ENCODE measurements at regions of chr17 and their contacts with region 1.

Region 1: DNA sequence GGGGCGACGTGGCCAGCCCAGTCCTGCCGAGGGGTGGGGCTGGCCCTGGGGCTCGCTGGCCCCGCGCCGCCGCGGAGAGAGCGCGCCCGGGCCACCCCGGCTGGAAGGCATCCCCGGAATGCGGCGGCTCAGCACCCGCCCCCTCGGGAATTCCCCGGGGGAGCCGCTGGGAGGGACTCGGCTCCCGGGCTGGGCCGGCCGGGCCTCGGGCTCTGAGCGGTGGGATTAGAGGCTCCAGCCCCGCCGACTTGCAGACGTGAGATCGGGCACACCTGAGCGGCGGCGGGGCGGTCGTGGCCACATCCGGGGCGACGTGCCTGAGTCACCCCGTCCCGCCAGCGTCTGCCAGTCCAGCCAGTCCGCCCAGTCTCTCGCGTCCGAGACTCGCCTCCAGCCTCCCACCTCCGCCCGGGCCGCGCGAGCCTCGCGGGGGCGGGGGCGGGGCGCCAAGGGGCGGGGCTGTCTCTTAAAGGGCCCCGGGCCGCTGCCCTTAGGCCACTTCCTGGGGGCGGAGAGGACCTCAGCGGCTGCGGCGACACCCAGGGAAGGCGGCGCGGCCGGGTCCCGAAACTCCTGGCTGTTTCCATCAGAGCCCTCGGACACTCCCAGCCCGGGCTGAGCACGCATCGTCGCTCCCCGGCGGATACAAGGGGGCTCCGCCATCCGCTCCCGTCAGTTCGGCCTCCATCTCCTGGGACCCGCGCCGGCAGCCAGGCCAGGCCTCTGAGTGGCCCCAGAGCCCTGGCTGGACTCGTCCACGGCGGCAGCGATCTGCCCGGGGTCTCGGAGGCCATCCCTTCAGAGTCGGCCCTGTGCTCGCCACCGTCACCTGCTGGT is at the start of gene KCTD11:
- DNase-seq: peak; percentile 96
- ATAC-seq: peak; percentile 82
- total RNA-seq, gene KCTD11: 4.4 TPM

Region 2: DNA sequence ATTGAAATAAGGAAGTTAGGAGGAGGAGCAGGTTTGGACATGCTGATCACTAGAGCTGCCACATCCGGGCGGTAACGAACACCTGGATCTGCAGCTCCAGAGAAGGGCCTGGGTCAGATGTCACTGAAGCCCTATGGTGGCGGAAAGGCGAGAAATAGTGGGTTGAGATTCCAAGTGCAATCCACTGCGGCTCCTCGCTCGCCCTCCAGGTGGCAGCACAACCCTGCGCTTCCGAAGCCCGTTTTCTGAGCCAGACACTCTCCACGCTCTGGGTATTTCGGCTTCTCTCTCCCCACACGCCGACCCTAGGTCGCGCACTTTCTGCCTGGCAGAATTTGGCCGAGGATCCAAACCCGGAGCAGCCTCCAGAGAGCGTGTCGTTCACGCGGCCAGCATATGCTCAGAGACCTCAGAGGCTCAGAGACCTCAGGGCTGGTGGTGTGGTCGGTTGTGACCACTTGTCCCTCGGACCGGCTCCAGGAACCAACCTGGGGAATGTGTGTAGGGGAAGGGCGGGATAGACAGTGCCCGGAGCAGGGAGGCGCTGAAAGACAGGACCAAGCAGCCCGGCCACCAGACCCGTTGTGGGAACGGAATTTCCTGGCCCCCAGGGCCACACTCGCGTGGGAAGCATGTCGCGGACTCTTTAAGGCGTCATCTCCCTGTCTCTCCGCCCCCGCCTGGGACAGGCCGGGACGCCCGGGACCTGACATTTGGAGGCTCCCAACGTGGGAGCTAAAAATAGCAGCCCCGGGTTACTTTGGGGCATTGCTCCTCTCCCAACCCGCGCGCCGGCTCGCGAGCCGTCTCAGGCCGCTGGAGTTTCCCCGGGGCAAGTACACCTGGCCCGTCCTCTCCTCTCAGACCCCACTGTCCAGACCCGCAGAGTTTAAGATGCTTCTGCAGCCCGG is 71.1 kb before region 1 on chr17:
- intact Hi-C with region 1: loop called (anchors 2 kb)
- DNase-seq: peak; percentile 90
- ATAC-seq: peak; percentile 67

Region 3: DNA sequence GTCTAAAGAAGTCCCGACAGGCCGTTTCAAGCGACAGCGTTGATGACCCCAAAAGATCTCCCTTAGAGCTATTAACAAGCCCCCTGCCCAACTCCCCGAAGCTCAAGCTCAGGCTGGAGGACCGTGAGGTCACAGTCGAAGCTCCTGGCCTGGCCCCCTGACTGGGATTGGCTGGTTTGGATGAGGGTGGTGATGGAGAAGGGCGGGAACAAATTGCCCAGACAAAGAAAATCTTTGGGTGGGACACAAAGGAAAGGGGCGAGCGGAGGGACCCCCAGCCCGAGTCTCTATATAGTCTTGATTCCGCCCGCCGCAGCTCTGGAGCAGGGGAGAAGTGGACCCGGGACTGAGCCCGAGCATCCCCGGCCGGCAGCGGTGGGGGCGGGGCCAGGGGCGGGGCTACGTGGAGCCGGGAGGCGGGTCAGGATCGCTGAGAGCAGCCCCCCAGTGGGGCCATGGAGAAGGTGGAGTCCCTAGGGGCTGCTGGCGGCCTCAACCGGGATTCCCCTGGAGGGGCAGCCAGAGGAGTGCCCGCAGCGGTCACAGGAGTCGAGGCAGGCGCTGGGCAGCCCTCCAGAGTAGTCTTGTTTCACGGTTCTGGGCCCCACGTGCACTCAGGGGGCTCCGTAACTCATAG is 21.8 kb before region 1 on chr17:
- intact Hi-C with region 1: loop called (anchors 2 kb)
- DNase-seq: peak; percentile 81
- ATAC-seq: peak; percentile 71

Region 4: DNA sequence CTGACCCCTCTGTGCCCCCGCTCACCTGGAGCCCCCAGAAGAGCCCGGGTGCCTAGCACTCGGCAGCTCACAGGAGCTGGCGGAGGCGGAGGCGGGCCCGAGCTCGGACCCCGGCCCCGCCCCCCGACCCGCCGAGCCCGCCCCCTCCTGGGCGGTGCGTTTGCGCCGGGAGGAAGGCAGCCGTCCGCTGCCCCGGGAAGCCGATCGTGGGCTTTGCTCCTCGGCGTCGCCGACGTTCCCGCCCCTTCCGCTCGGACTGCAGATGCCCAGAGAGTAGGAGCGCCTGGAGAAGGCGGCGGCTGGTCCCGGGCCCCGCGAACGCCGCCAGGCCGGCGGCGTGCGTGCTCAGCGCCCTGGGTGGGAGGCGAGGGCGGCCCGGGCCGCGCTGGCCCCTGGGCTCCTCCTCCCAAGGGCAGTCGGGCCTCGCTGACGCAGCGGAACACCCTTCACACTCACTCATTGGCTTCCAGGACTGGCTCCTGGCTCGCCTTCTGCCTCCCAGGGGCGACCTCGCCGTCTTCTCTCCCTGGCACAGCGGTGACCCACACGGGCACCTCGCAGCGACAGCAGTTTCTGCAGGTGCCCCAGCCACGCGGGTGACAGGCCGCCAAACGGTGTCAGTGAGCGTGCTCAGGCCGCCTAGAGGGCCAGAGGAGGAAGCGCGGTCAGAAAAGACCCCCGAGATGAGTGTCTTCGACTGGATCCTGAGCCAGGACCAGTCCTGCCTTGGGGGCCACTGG is 42.7 kb after region 1 on chr17 and contains the start of gene PLSCR3:
- intact Hi-C with region 1: loop called (anchors 5 kb)
- DNase-seq: peak; percentile 95
- ATAC-seq: peak; percentile 95
- total RNA-seq, gene PLSCR3: 14.0 TPM

Region 5: DNA sequence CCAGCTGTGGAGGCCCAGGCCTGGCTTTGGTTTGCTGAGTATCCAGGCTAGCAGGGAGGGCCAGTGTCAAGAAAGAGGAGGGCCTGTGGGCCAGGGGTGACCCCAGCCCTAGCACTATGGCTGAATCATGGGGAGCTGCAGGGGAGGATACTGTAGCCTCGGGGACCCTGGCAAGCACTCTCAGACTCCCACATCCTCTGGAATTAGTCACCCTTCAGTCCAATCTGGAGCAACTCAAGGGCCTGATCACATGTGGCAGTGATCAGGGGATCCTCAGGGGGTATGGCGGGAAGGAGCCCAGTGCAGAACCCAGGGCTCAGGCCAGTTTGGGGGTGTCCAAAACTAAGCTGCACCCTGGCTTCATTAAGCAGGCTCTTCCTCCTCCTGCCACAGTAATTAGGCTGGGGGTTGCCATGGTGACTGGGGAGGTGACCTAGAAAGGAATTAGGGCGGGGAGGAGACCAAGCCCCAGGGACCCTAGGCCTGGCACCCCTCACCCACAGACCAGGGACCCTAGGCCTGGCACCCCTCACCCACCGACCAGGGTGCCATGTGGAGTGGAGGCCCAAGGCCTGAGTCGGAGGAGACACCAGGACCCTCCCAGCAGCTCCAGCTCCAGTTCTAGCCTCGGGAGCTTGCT is 61.6 kb after region 1 on chr17:
- intact Hi-C with region 1: no loop called
- DNase-seq: no peak
- ATAC-seq: no peak

Region 6: GRCh38 chr17:7435221-7435675 is 83.4 kb after region 1 on chr17 and contains the start of gene TMEM102:
- intact Hi-C with region 1: loop called (anchors 10 kb)
- DNase-seq: peak; percentile 96
- ATAC-seq: peak; percentile 84
- total RNA-seq, gene TMEM102: 1.7 TPM

Region 7: GRCh38 chr17:7496470-7497183 is 144.7 kb after region 1 on chr17:
- intact Hi-C with region 1: loop called (anchors 10 kb)
- DNase-seq: no peak
- ATAC-seq: peak; percentile 45

Region 8: DNA sequence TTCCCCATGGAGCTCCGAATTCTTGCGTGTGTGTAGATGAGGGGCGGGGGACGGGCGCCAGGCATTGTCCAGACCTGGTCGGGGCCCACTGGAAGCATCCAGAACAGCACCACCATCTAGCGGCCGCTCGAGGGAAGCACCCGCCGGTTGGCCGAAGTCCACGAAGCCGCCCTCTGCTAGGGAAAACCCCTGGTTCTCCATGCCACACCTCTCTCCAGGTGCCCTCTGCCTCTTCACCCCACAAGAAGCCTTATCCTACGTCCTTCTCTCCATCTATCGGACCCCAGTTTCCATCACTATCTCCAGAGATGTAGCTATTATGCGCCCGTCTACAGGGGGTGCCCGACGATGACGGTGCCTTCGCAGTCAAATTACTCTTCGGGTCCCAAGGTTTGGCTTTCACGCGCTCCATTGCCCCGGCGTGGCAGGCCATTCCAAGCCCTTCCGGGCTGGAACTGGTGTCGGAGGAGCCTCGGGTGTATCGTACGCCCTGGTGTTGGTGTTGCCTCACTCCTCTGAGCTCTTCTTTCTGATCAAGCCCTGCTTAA is 209.2 kb after region 1 on chr17:
- intact Hi-C with region 1: loop called (anchors 10 kb)
- DNase-seq: peak; percentile 94
- ATAC-seq: peak; percentile 82

Measured in Right ventricle myocardium superior (tissue), 1 donor.